ENCODE measurements at regions of chr15 and their contacts with region 1.

Region 1: DNA sequence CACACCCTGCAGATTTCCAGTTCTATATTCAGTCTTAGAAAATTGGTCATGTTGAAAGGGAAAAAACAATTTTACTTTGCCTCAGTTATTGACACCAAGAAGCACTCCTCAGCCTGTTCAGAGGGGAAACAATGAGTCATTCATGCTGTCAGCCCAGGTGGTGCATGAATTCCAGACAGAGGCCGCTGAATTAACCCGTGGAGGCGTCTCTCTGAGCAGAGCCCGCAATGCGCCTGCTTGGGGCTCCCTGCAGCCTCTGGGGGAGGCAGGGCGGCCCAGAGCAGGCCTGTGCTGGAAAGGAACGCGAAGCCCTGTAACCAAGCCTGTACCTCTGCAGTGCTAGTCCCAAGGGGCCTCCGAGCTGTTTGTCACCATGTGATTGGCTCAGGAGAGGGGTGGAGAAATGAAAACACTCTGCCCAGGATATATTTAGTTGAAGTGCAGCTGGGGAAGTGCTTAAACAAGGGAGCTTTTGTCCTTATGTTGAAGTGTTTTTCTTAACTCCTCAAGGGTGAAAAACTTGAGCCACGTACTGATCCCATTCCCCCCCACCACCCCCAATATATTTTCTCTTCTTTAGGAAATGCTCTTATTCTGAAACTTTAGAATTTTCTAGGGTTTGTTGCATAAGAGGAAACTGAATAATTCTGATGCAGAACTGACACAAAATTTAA is 68.3 kb upstream of the CHD2 start:
- DNase-seq: peak; percentile 95
- H3K4me3 Mint-ChIP-seq: peak overlapping the region; percentile 64
- H3K27ac Mint-ChIP-seq: peak overlapping the region; percentile 96
- H3K4me1 Mint-ChIP-seq: peaks cover 64% of the 10 kb centered on the region
- H3K27me3 Mint-ChIP-seq: no peaks in the 10 kb centered on the region

Region 2: DNA sequence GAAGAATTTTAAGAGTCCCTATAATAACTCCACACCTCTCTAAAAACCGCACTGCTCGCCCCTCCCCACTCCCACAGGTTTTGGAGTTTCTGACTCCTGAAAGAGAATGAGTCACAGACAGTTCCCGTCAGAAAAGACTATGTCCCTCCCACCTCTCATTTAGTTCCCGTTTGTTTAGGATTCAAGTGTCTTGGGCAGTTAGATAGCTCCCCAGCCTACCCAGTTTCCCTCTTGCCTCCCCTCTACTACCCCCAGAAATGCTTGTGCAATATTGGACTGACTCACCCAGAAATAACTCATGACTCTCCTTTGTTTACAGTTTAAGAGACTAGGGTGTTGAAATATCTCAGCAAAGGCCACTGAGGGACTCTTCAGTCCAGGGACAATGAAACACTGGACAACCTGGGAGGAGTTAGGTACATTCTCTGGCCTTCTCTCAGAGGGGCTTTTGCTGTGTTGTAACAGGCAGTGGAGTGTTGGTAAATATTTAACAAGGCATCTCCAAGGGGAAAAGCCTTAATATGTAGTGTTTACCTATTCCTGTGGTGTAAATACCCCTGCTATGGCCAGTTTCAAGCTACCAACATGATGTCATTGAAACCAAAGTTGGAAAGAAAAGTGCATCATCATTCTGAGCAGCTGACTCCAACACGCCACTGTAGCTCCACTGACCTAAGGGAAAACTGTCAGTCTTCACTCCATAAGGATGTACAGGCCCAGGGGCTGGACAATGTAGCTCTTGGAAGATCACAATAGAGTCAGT is 27.8 kb before region 1 on chr15:
- CTCF ChIA-PET with region 1: interaction called, 38 read pairs
- intact Hi-C with region 1: loop called (anchors 1 kb)
- DNase-seq: peak; percentile 94
- H3K4me3 Mint-ChIP-seq: no peak overlapping the region
- H3K27ac Mint-ChIP-seq: peak overlapping the region; percentile 78
- H3K4me1 Mint-ChIP-seq: peaks cover 39% of the 10 kb centered on the region
- H3K27me3 Mint-ChIP-seq: no peaks in the 10 kb centered on the region

Region 3: GRCh38 chr15:92820236-92821021 is 11.4 kb before region 1 on chr15:
- CTCF ChIA-PET with region 1: interaction called, 19 read pairs
- intact Hi-C with region 1: loop called (anchors 1 kb)
- DNase-seq: peak; percentile 91
- H3K4me3 Mint-ChIP-seq: peak overlapping the region; percentile 79
- H3K27ac Mint-ChIP-seq: peak overlapping the region; percentile 98
- H3K4me1 Mint-ChIP-seq: peaks cover 73% of the 10 kb centered on the region
- H3K27me3 Mint-ChIP-seq: no peaks in the 10 kb centered on the region

Region 4: GRCh38 chr15:92845126-92845508 is 13.3 kb after region 1 on chr15:
- CTCF ChIA-PET with region 1: interaction called, 14 read pairs
- intact Hi-C with region 1: loop called (anchors 1 kb)
- DNase-seq: no peak
- H3K4me3 Mint-ChIP-seq: peak overlapping the region; percentile 71
- H3K27ac Mint-ChIP-seq: peak overlapping the region; percentile 96
- H3K4me1 Mint-ChIP-seq: peaks cover 85% of the 10 kb centered on the region
- H3K27me3 Mint-ChIP-seq: no peaks in the 10 kb centered on the region

Region 5: GRCh38 chr15:92881802-92882696 is 50.3 kb after region 1 on chr15:
- CTCF ChIA-PET with region 1: interaction called, 8 read pairs
- intact Hi-C with region 1: loop called (anchors 1 kb)
- DNase-seq: peak; percentile 100
- H3K4me3 Mint-ChIP-seq: peak overlapping the region; percentile 95
- H3K27ac Mint-ChIP-seq: peak overlapping the region; percentile 98
- H3K4me1 Mint-ChIP-seq: peaks cover 51% of the 10 kb centered on the region
- H3K27me3 Mint-ChIP-seq: no peaks in the 10 kb centered on the region

Region 6: DNA sequence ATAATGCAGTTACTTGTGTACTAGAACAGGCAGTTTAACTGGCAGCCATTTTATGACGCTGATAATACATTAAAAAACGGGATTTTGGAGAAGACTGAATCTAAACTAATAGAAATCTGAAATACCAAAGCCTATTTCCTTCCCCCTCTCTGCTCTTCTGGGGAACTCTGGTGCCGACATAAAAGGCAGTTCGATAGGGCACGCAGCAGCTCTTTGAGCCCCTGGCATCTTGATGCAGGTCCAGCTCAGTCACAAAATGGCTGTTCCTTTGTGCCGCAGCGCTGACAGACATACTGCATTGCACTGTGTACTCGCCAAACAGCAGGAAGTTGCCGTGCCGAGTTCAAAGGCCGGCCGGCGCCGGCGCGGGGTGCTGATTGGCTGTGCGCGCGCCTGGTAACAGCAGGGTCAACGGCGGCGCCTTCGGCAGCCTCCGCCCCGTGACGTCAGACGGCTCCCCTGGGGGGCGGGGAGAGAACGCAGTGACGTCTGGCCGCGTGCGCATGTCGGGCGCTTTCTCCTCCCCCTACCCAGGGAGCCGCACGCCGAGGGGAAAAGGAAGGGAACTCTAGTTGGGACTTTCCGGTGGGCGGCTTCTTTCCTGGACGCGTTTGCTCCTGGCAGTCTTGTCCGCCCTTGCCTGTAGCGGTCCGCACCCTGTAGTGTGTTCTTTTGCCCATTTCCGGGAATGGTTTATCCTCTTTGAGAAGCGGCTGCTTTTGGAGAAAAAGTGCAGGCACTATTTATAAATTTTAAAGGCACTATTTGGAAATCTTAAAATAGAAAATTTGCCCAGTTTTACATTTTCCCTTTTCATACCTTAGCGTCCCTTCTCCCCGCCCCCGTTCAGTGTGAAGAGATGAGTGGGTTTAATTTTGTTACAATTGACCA is 72.4 kb after region 1 on chr15:
- CTCF ChIA-PET with region 1: interaction called, 10 read pairs
- intact Hi-C with region 1: loop called (anchors 1 kb)
- DNase-seq: peak; percentile 99
- H3K4me3 Mint-ChIP-seq: peak overlapping the region; percentile 92
- H3K27ac Mint-ChIP-seq: peak overlapping the region; percentile 100
- H3K4me1 Mint-ChIP-seq: peaks cover 50% of the 10 kb centered on the region
- H3K27me3 Mint-ChIP-seq: peaks cover 4% of the 10 kb centered on the region

Measured in activated naive CD4-positive, alpha-beta T cell treated with anti-CD3 and anti-CD28 coated beads for 36 hours (primary cell).